Right lobe of liver (tissue), 6 donors: ENCODE measurements at regions of chr16 and their contacts with region 1.

Region 1: GRCh38 chr16:89410794-89411309 is 79.5 kb downstream of the ANKRD11 start:
- DNase-seq: peak; percentile 84 to 94 (median 93)
- ATAC-seq: peak; percentile 81 to 89 (median 86)
- H3K4me3 ChIP-seq: no peak overlapping the region
- H3K27ac ChIP-seq: peak overlapping the region in 2 of 3 donors; percentile 32 to 73
- H3K4me1 ChIP-seq: peaks cover 0 to 84% (median 43%) of the 10 kb centered on the region in 4 donors
- H3K27me3 ChIP-seq: no peaks in the 10 kb centered on the region
- CTCF ChIP-seq: peak in 2 of 4 donors; percentile 24 to 26
- POLR2A ChIP-seq: no peak

Region 2: GRCh38 chr16:89395141-89395874 is 15.5 kb before region 1 on chr16:
- intact Hi-C with region 1: loop called in 1 of 2 experiments (anchors 2 kb)
- DNase-seq: peak; percentile 81 to 96 (median 91)
- ATAC-seq: peak; percentile 67 to 93 (median 81)
- H3K4me3 ChIP-seq: no peak overlapping the region
- H3K27ac ChIP-seq: peak overlapping the region in 2 of 3 donors; percentile 71 to 74
- H3K4me1 ChIP-seq: peaks cover 0 to 36% (median 19%) of the 10 kb centered on the region in 4 donors
- H3K27me3 ChIP-seq: no peaks in the 10 kb centered on the region
- CTCF ChIP-seq: no peak
- POLR2A ChIP-seq: no peak